HepG2 (cell line): ENCODE measurements at regions of chrX and their contacts with region 1.

Region 1: DNA sequence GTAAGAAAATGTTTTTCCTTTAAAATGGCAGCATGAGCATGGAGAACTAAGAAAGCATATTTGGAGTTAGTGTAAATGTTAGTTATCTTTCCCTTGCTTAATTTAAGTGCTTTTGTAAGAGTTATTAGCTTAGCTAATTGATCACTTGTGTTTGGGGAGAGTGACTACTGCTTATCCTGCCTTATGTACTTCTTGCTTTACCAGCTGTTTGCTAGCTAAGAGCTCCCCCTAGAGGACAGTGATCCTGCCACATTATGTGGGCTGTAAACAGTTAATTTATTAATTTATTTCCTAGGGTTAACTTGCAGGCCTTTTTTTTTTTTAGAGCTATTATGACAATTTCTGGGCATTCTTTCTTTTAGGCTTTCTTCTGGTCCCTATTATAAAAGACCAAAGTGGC is 435.8 kb downstream of the MAGEB5 start:
- DNase-seq: no peak
- ATAC-seq: no peak
- H3K4me3 ChIP-seq: no peak overlapping the region
- H3K27ac ChIP-seq: no peak overlapping the region
- H3K4me1 ChIP-seq: no peaks in the 10 kb centered on the region
- H3K27me3 ChIP-seq: no peaks in the 10 kb centered on the region
- CTCF ChIP-seq: no peak
- EP300 ChIP-seq: no peak
- POLR2A ChIP-seq: no peak
- RAD21 ChIP-seq: no peak

Region 2: GRCh38 chrX:26918633-26919032 is 266.9 kb after region 1 on chrX:
- CTCF ChIA-PET with region 1: no interaction called
- POLR2A ChIA-PET with region 1: no interaction called
- in situ Hi-C with region 1: no loop called
- intact Hi-C with region 1: loop called (anchors 1 kb)
- DNase-seq: peak; percentile 23
- ATAC-seq: peak; percentile 86
- H3K4me3 ChIP-seq: no peak overlapping the region
- H3K27ac ChIP-seq: no peak overlapping the region
- H3K4me1 ChIP-seq: no peaks in the 10 kb centered on the region
- H3K27me3 ChIP-seq: no peaks in the 10 kb centered on the region
- CTCF ChIP-seq: peak; percentile 65
- EP300 ChIP-seq: no peak
- POLR2A ChIP-seq: no peak
- RAD21 ChIP-seq: no peak

Region 3: DNA sequence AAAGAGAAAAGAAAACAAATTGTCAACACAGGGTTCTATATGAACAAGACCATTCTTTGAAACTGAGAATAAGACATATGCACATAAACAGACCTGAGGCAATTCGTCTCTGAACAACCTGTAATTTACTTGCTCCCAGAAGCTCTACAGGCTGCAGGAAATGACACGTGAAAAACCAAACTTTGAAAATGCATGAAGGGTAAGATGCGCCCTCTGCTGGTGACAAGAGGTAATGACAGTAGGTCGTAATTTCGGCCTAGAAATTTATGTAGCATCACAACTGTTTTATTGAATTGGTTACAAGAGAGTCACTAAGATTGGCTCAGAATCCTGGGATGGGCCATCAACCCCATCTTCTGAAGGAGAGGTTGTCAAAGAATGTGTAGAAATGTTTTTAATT is 534.9 kb after region 1 on chrX:
- CTCF ChIA-PET with region 1: interaction called, 6 read pairs
- POLR2A ChIA-PET with region 1: no interaction called
- in situ Hi-C with region 1: loop called (anchors 25 kb)
- intact Hi-C with region 1: no loop called
- DNase-seq: peak; percentile 13
- ATAC-seq: no peak
- H3K4me3 ChIP-seq: no peak overlapping the region
- H3K27ac ChIP-seq: no peak overlapping the region
- H3K4me1 ChIP-seq: no peaks in the 10 kb centered on the region
- H3K27me3 ChIP-seq: no peaks in the 10 kb centered on the region
- CTCF ChIP-seq: peak; percentile 73
- EP300 ChIP-seq: no peak
- POLR2A ChIP-seq: no peak
- RAD21 ChIP-seq: peak; percentile 28; the same call in 1 of the 2 replicates

Region 4: DNA sequence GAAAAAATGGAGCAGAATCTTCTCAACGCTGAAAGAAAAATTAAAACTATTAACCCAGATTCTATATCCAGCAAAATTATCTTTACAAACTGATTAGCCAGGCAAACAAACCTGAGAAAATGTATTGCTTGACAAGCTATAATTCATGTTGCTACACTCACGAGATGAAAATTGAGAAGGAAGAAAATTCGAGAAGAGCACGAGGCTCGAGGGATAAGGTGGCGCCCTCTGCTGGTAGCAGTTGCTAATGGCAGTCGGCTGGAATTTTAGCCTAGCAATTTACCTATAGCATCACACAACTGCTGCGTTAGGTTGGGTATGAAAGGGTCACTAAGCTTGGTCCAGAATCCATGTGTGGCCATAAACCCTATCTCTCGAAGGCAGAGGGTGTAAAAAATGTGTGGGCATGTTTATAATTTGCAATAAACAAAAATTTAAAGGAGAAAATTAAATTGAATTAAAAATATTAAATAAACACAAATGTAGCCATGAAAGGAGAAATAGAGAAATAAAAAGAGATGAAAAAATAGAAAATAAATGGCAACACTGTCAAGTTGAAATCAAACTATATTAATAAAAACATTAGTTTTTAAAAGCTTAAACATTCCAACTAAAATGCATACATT is 684.8 kb after region 1 on chrX:
- CTCF ChIA-PET with region 1: no interaction called
- POLR2A ChIA-PET with region 1: no interaction called
- in situ Hi-C with region 1: no loop called
- intact Hi-C with region 1: loop called (anchors 2 kb)
- DNase-seq: peak; percentile 2
- ATAC-seq: no peak
- H3K4me3 ChIP-seq: no peak overlapping the region
- H3K27ac ChIP-seq: no peak overlapping the region
- H3K4me1 ChIP-seq: no peaks in the 10 kb centered on the region
- H3K27me3 ChIP-seq: no peaks in the 10 kb centered on the region
- CTCF ChIP-seq: peak; percentile 73
- EP300 ChIP-seq: no peak
- POLR2A ChIP-seq: no peak
- RAD21 ChIP-seq: no peak